Activated naive CD4-positive, alpha-beta T cell treated with anti-CD3 and anti-CD28 coated beads, Interleukin-2, amount 10 ng/mL, durations not matched to agents 7 days and 5 days (primary cell): ENCODE measurements at regions of chr17 and their contacts with region 1.

Region 1: DNA sequence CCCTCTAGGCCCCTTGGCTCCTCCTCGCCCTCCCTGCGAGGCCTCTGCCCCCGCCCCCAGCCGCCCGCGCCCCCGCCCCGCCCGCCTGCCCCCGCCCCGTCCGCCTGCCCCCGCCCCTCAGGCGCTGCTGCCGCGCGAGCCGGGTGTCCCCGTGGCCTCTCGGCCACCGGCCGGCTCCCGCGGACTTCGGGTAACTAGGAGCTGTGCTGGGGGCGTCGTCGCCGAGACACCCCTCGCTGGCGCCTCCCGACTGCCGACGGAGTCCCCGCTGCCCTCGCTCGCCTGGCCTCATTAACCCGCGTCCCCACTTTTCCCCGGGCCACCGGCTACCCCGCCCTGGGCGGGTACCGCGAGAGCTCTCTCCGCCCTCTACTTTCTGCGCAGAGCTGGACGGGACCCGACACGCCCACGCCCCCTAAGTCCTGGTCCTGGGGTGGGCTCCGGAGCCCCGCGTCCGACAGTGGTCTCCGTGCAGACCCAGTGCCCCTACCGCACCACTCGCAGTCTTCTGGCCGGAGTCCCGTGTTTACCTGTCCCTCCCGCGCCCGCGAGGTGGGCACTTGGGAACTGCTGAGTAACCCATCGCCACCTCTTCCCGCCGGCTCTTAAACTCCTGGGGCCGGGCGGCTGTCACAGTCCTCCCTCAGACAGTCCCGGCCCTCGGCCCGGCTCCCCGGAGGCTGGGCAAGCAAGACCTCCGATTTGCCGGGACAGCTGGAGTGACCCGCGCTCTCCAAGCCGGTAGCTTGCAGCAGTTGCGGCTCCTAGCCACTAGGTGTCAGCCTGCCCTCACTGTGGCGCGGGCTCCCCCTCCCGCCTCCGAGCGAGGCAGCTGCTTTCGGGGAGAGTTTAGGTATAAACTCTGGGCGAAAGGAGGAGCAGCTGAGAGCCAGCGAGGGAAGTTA is at the start of gene TLCD1:
- DNase-seq: peak; percentile 94
- H3K4me3 Mint-ChIP-seq: peak within 1 kb of the TSS; percentile 94
- H3K27ac Mint-ChIP-seq: peak within 1 kb of the TSS; percentile 100
- H3K4me1 Mint-ChIP-seq: peaks cover 72% of the 10 kb centered on the region
- H3K27me3 Mint-ChIP-seq: no peaks in the 10 kb centered on the region

Region 2: GRCh38 chr17:28701987-28702751 is 24.3 kb before region 1 on chr17:
- CTCF ChIA-PET with region 1: no interaction called
- DNase-seq: no peak
- H3K4me3 Mint-ChIP-seq: no peak overlapping the region
- H3K27ac Mint-ChIP-seq: peak overlapping the region; percentile 67
- H3K4me1 Mint-ChIP-seq: no peaks in the 10 kb centered on the region
- H3K27me3 Mint-ChIP-seq: no peaks in the 10 kb centered on the region

Region 3: DNA sequence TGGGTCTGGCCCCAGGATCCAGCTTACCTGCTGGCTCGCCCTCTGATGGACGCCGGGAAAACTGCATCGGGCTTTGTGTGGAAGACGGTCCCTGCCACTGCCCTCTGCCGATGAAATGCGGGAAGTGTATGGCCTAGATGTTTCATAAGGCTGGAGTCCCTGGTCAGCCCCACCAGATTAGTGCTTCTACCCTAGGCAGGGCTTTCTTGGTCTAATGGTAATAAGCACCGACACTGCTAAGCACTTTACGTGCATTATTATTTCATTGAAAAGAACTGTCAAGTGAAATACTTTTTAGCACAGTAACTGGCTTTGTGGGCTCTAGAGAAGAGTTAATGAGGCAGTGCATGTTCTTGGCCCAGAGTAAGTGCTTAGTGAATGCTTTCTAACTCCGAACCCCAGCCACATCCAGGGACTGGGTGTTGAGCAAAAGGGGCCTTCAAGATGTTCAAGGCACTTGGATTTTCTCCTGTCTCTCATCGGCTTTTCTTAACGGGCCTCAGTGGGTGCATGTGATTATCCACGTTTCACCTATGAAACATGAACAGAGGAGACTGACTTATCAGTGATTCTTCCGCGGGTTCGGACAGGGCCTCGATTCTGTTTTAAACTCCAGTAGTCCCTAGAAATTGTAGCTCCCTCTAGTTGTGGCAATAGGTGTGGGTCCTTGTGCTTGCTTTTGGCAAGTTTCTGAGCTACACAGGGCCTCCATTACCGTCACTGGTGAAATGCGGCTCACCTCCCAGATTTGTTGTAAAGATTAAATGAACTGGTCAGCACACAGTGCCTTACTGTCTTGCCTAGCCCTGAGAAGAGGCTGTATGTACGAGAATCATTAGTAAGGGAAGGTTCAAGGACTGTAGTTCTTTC is 23.9 kb after region 1 on chr17:
- CTCF ChIA-PET with region 1: interaction called, 415 read pairs
- DNase-seq: peak; percentile 94
- H3K4me3 Mint-ChIP-seq: no peak overlapping the region
- H3K27ac Mint-ChIP-seq: peak overlapping the region; percentile 55
- H3K4me1 Mint-ChIP-seq: peaks cover 38% of the 10 kb centered on the region
- H3K27me3 Mint-ChIP-seq: no peaks in the 10 kb centered on the region

Region 4: GRCh38 chr17:28896884-28897768 is 170.6 kb after region 1 on chr17 and contains the start of gene FLOT2:
- CTCF ChIA-PET with region 1: interaction called, 23 read pairs
- DNase-seq: peak; percentile 78
- H3K4me3 Mint-ChIP-seq: peak within 1 kb of the TSS; percentile 98
- H3K27ac Mint-ChIP-seq: peak within 1 kb of the TSS; percentile 95
- H3K4me1 Mint-ChIP-seq: peaks cover 71% of the 10 kb centered on the region
- H3K27me3 Mint-ChIP-seq: no peaks in the 10 kb centered on the region

Region 5: DNA sequence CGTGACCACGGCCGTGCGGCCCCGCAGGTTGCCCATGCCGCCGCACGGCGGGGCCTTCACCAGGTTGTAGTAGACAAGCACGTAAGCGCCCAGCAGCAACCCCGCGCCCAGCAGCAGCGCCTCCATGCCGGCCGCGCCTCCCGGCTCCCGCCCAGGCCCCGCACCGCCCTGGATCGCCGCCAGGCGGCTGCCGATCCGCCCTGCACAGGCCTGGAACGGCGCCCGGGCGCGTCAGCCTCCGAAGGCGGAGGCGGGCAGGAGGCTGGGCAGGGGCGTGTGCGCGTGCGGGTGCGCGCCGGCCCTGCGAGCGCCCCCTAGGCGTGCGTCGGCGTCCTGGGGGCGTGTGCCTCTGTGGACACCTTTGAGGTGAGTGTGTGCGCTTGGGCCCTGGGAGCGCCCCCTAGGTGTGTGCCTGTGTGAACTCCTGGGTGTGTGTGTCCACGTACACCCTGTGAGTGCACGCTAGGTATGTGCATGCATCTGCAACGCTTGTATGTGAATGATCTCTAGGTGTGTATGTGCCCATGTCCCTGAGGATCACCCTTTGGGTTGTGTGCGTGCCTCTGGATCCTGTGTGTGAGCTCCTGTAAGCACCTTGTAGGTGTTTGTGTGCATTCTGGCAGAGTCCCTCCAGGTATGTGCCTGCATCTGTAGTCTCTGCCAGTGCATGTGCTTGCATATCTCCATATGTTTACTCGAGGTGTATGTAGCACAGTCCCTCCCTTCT is 176.5 kb after region 1 on chr17 and contains the start of gene DHRS13:
- CTCF ChIA-PET with region 1: interaction called, 23 read pairs
- DNase-seq: peak; percentile 95
- H3K4me3 Mint-ChIP-seq: peak within 1 kb of the TSS; percentile 93
- H3K27ac Mint-ChIP-seq: peak within 1 kb of the TSS; percentile 94
- H3K4me1 Mint-ChIP-seq: peaks cover 47% of the 10 kb centered on the region
- H3K27me3 Mint-ChIP-seq: no peaks in the 10 kb centered on the region

Region 6: DNA sequence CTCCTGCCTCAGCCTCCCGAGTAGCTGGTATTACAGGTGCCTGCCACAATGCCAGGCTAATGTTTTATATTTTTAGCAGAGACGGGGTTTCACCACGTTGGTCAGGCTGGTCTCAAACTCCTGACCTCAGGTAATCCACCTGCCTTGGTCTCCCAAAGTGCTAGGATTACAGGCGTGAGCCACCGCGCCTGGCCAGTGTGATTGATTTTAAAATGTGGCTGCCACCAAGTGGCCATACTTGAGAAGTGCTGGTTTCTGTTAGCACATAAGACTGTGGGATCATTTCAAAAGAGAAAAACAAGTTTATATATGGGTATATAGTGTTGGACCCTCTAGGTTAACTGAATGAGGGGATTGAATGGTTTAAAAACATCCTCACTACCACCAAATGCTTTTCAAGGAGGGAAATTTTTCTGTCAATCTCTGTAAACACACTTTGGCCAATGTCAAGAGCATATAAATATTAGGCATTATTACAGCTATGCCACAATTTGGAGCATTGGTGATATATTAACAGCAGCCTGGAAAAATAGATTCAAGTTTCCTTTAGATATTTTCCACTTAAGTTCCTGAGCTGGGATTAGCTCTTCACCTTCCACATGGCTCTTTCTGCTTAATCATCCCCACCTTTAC is 189.9 kb after region 1 on chr17:
- CTCF ChIA-PET with region 1: interaction called, 27 read pairs
- DNase-seq: peak; percentile 67
- H3K4me3 Mint-ChIP-seq: no peak overlapping the region
- H3K27ac Mint-ChIP-seq: peak overlapping the region; percentile 13
- H3K4me1 Mint-ChIP-seq: no peaks in the 10 kb centered on the region
- H3K27me3 Mint-ChIP-seq: no peaks in the 10 kb centered on the region

Region 7: DNA sequence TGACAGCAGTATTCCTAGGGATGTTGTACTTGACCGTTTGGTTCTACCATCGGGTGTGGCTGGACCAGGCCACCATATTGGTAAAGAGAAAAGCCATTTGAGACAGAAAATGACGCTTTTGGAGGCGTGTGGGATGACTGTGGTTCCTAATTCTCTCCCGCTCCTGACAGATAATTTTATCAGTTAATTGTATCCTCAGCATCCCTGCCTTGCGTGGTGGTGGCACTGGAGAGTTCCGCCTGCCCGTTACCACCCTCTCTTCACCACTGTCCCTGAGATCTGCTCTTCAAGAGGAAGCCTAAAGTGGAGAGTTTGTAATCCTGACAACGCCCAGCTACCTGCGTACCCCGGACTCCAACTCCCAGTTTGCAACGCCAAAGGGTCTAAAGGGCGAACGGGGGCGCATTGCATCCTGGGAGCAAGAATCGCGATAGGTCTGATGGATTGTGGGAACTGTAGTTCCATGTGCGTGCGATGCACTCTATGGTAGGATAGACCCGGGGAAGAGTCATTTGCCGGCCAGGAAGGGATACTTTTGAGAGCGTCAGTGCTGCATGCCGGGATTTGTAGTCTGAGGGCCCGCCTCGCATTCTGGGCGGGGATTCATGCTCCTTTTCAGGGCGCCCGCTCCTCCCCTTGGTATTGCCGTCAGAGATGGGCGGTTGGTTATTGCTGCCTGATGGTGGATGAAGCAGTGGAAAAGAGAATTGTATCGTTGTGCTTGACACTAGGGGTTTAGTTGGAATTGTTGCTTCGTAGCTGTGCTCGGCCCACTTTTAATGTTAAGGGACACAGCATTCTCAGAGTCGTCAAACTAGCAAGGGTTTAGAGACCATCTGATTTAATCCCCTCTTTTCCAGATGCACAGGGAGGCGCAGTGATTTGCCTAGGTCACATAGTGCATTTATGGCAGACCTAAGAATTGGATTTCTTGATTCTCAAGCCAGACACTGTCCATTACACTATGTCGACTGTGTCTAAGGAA is 225.8 kb after region 1 on chr17:
- CTCF ChIA-PET with region 1: interaction called, 43 read pairs
- DNase-seq: peak; percentile 98
- H3K4me3 Mint-ChIP-seq: no peak overlapping the region
- H3K27ac Mint-ChIP-seq: no peak overlapping the region
- H3K4me1 Mint-ChIP-seq: peaks cover 18% of the 10 kb centered on the region
- H3K27me3 Mint-ChIP-seq: peaks cover 3% of the 10 kb centered on the region